ENCODE measurements at regions of chr9 and their contacts with region 1.

Region 1: DNA sequence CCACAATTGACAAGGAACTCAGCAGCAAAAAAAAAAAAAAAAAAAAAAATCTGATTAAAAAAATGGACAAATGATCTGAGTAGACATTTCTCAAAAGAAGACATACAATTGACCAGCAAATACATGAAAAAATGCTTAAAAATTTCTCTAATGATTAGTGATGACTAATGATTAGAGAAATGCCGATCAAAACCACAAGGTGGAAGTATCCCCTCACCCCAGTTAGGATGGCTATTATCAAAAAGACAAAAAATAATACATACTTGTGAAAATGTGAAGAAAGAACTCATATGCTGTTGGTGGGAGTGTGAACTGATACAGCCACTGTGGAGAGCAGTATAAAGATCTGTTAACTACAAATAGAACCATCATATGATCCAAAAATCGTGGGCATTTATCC is 245.3 kb downstream of the OSTF1 start:
- DNase-seq: no peak
- ATAC-seq: no peak
- H3K4me3 ChIP-seq: no peak overlapping the region
- H3K27ac ChIP-seq: no peak overlapping the region
- H3K4me1 ChIP-seq: no peaks in the 10 kb centered on the region
- H3K27me3 ChIP-seq: no peaks in the 10 kb centered on the region
- CTCF ChIP-seq: no peak
- POLR2A ChIP-seq: no peak
- RAD21 ChIP-seq: no peak

Region 2: DNA sequence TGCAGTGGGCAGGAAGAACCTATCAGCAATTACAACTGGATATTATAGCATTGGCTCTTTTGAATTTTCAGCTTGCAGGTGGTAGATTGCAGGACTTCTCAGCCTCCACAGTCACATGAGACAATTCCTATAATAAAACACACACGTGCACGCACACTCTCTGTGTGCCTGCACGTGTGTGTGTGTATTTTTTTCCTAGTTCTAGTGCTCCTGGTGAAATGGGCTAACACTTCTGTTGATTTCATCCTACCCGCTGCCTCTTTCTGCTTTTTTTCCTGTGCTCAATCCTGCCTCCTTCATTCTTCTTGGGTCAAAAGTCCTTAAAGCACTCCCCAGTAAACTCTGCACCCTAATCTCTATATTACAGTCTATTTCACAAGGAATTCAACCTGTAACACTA is 74.8 kb after region 1 on chr9:
- CTCF ChIA-PET with region 1: no interaction called
- POLR2A ChIA-PET with region 1: no interaction called
- dilution Hi-C with region 1: no loop called
- in situ Hi-C with region 1: no loop called
- intact Hi-C with region 1: loop called (anchors 10 kb)
- DNase-seq: no peak
- ATAC-seq: no peak
- H3K4me3 ChIP-seq: no peak overlapping the region
- H3K27ac ChIP-seq: no peak overlapping the region
- H3K4me1 ChIP-seq: no peaks in the 10 kb centered on the region
- H3K27me3 ChIP-seq: no peaks in the 10 kb centered on the region
- CTCF ChIP-seq: no peak
- POLR2A ChIP-seq: no peak
- RAD21 ChIP-seq: no peak